ENCODE measurements at regions of chr11 and their contacts with region 1.

Region 1: DNA sequence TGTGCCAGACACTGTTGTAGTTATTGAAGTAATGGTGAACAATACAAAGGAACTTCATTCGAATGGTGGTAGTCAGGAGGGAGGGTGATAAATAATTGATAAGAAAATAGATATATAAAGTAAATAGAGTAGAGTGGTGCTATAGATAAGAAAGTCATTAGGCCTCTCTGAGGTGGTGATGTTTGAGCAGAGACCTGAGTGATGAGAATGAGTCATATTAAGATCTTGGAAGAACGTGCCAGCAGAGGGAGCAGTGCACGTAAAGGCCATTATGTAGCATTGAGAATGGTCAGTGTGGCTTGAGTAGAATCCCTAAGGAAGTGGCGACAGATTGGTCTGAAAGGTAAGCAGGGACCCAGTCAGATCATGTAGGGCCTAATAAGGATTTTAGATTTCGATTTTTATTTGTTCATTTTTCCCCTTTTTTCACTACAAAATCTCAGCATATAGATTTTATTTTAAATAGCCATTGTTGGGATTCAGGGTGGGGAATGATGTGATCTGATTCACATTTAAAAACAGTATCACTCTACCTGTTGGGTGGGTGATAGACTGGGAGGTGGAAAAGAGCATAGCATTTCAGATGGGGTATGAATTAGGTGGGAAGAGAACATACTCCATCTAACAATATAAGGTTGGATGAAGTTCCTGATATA is 44.7 kb downstream of the CCDC90B start:
- DNase-seq: no peak
- ATAC-seq: peak; percentile 93
- H3K4me3 ChIP-seq: no peak overlapping the region
- H3K27ac ChIP-seq: no peak overlapping the region
- H3K4me1 ChIP-seq: no peaks in the 10 kb centered on the region
- H3K27me3 ChIP-seq: no peaks in the 10 kb centered on the region
- CTCF ChIP-seq: peak; percentile 61

Region 2: DNA sequence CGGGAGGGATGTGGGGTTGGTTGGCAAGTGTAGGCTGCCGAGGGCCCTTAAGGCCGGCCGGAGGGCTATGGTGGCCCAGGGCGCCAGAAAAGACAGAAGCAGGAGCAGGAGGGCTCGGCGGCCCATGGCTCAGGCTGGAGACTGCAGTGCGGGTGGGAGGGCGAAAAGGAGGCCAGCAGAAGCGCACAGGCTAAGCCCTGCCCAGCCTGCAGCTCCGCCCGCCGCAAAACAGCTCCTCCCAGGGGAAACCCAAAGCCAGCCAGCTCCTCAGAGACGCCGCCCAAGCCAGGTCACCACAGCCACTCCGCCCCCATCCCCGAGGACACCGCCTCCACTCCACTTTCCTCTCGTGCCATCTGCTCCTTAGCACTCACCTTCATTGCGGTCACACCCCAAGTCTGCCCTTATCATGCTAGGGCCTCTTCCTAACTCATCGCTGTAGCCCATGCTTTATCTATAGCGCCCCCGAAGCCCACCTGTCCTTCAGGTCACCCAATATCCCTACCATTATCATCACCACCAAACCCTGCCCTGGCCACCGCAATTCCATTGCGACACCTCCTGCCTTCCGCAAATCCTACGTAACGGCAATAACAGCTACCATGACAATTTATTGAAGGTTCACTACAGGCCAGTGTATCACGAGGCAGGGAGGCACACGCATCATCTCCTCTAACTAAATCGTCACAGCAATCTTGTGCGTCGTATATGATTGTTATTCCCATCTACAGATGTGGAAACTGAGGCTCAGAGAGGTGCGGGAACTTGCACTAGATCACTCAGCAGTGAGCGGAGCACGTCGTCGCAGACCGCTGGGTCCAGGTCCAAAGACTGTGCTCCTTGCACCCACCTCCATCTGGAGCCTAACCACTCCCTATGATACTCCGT is 340.9 kb before region 1 on chr11 and contains the start of gene PRCP:
- intact Hi-C with region 1: loop called (anchors 10 kb)
- DNase-seq: peak; percentile 97
- ATAC-seq: peak; percentile 95
- H3K4me3 ChIP-seq: peak within 1 kb of the TSS; percentile 68
- H3K27ac ChIP-seq: peak within 1 kb of the TSS; percentile 84
- H3K4me1 ChIP-seq: peaks cover 20% of the 10 kb centered on the region
- H3K27me3 ChIP-seq: no peaks in the 10 kb centered on the region
- CTCF ChIP-seq: no peak
- total RNA-seq, gene PRCP: 91.3 TPM